Common myeloid progenitor, CD34-positive (primary cell): ENCODE measurements at regions of chr6 and their contacts with region 1.

Region 1: GRCh38 chr6:30483677-30484279 is 5.5 kb upstream of the HLA-E start:
- DNase-seq: peak; percentile 68 to 79 (median 71)
- H3K4me3 ChIP-seq: no peak overlapping the region
- H3K27ac ChIP-seq: no peak overlapping the region
- H3K4me1 ChIP-seq: peaks cover 7 to 28% (median 19%) of the 10 kb centered on the region in 4 experiments
- H3K27me3 ChIP-seq: peaks cover 4 to 42% (median 26%) of the 10 kb centered on the region in 5 experiments

Region 2: DNA sequence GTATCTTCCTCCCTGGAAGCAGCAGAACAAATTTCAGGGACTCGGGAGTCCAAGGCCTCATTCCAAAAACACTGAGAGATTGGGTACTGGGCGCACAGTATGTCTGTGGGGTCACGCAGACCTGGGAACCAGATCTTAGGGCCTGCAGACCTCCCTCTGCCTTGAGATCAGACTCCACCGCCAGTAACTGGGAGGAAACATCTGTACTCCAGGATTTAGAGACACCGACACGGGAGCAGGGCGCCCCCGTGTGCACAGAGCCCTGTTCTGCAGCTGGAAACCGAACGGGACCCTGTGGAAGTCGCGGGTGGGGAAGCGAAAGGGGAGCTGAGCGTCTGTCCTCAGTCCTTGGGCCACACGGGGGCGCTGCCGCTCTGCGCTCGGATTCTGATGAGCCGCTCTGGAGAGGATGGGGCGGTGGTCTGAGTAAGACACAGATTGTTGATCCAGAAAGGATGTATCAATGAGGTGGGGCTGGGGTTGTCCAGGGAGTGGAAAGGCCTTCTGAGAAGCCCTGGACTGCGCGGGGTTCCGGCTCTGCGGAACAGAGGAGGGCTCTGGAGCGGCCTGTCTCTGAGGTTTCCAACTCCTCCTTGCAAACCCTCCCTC is 30.2 kb before region 1 on chr6:
- CTCF ChIA-PET with region 1: interaction called, 22 read pairs
- POLR2A ChIA-PET with region 1: no interaction called
- DNase-seq: peak; percentile 91 to 94 (median 92)
- H3K4me3 ChIP-seq: no peak overlapping the region
- H3K27ac ChIP-seq: no peak overlapping the region
- H3K4me1 ChIP-seq: peaks cover 0 to 38% (median 34%) of the 10 kb centered on the region in 4 experiments
- H3K27me3 ChIP-seq: peaks cover 9 to 84% (median 57%) of the 10 kb centered on the region in 5 experiments

Region 3: GRCh38 chr6:30463651-30464618 is 19.8 kb before region 1 on chr6:
- CTCF ChIA-PET with region 1: interaction called, 10 read pairs
- POLR2A ChIA-PET with region 1: interaction called, 4 read pairs
- DNase-seq: peak; percentile 92 to 94 (median 94)
- H3K4me3 ChIP-seq: peak overlapping the region in 1 of 7 experiments; percentile 14
- H3K27ac ChIP-seq: no peak overlapping the region
- H3K4me1 ChIP-seq: peaks cover 7 to 29% (median 22%) of the 10 kb centered on the region in 4 experiments
- H3K27me3 ChIP-seq: peaks cover 44 to 96% (median 70%) of the 10 kb centered on the region in 5 experiments

Region 4: GRCh38 chr6:30616811-30617564 is 133.2 kb after region 1 on chr6 and contains the start of gene PPP1R10:
- CTCF ChIA-PET with region 1: interaction called, 30 read pairs
- POLR2A ChIA-PET with region 1: interaction called, 3 read pairs
- DNase-seq: peak; percentile 100
- H3K4me3 ChIP-seq: peak within 1 kb of the TSS; percentile 74 to 100 (median 100)
- H3K27ac ChIP-seq: peak within 1 kb of the TSS; percentile 100
- H3K4me1 ChIP-seq: peaks cover 18 to 42% (median 29%) of the 10 kb centered on the region in 4 experiments
- H3K27me3 ChIP-seq: no peaks in the 10 kb centered on the region